Activated T-helper 2 cell treated with anti-CD3 and anti-CD28 coated beads, Interferon-gamma antibody, Interleukin-2, Interleukin-4, amounts not matched to agents 10 μg/mL and 5 μg/mL and 100 μg/mL, durations not matched to agents 14 hours and 24 hours and 36 hours (primary cell): ENCODE measurements at regions of chrX and their contacts with region 1.

Region 1: GRCh38 chrX:48715072-48715471 is 18.5 kb downstream of the SUV39H1 start:
- DNase-seq: no peak
- H3K4me3 Mint-ChIP-seq: peak overlapping the region; percentile 15
- H3K27ac Mint-ChIP-seq: peak overlapping the region; percentile 94
- H3K4me1 Mint-ChIP-seq: peaks cover 75% of the 10 kb centered on the region
- H3K27me3 Mint-ChIP-seq: no peaks in the 10 kb centered on the region

Region 2: GRCh38 chrX:48696301-48697181 is 18.5 kb before region 1 on chrX and contains the start of gene SUV39H1:
- intact Hi-C with region 1: loop called (anchors 1 kb)
- DNase-seq: peak; percentile 84
- H3K4me3 Mint-ChIP-seq: peak within 1 kb of the TSS; percentile 94
- H3K27ac Mint-ChIP-seq: peak within 1 kb of the TSS; percentile 94
- H3K4me1 Mint-ChIP-seq: peaks cover 26% of the 10 kb centered on the region
- H3K27me3 Mint-ChIP-seq: no peaks in the 10 kb centered on the region
- total RNA-seq, gene SUV39H1: 28.8 and 29.6 TPM in 2 replicates

Region 3: DNA sequence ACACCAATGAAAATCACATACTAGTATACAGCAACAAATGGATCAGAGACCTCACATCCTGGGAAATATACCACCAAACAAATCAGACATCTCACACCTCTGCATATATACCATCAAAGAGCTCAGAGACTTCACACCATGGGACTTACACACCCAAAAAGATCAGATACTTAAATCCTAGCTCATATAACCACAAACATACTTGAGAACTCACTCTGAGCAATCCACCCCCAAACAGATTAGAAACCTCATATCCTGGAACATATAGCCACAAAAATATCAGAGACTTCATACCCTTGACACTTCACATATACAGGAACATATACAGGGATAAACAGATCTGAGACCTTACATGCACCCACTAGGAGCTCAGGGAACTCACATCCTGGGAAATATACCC is 13.6 kb after region 1 on chrX:
- intact Hi-C with region 1: loop called (anchors 2 kb)
- DNase-seq: no peak
- H3K4me3 Mint-ChIP-seq: no peak overlapping the region
- H3K27ac Mint-ChIP-seq: peak overlapping the region; percentile 31
- H3K4me1 Mint-ChIP-seq: peaks cover 24% of the 10 kb centered on the region
- H3K27me3 Mint-ChIP-seq: no peaks in the 10 kb centered on the region

Region 4: DNA sequence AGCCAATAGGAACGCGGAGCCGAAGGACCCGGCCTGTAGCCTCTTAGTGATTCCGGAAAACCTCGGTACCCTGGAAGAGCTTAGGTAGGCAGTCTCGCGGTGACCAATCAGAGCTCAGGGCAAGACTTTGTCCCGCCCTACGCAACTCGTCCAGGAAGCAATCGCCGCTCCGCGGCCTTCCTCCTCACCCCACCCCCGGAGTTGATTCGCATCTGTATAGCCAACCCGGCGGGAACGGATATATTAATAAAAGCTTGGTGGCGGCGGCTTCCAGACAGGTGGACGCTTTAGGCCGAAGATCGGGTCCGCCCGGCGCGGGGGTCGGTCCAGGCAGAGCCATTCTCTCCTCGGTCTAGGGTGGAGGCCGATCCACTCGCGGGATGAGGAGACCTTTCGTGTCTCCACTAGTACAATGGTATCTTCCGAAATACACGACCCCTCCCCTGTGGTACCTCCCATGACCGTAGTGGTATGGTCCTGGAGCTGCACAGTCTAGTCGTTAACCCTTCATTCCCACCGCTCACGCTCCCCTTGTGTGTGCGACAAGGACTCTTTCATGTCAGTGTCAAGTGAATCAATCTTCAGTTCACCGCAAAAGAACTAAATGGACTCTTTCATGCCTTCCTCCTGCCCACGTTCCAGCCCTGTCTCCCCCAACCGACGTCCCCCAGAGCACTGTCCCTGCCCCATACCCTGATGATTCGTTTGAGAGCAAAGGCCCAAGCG is 22.3 kb after region 1 on chrX:
- intact Hi-C with region 1: loop called (anchors 1 kb)
- DNase-seq: peak; percentile 86
- H3K4me3 Mint-ChIP-seq: peak overlapping the region; percentile 89
- H3K27ac Mint-ChIP-seq: peak overlapping the region; percentile 93
- H3K4me1 Mint-ChIP-seq: peaks cover 15% of the 10 kb centered on the region
- H3K27me3 Mint-ChIP-seq: no peaks in the 10 kb centered on the region

Region 5: DNA sequence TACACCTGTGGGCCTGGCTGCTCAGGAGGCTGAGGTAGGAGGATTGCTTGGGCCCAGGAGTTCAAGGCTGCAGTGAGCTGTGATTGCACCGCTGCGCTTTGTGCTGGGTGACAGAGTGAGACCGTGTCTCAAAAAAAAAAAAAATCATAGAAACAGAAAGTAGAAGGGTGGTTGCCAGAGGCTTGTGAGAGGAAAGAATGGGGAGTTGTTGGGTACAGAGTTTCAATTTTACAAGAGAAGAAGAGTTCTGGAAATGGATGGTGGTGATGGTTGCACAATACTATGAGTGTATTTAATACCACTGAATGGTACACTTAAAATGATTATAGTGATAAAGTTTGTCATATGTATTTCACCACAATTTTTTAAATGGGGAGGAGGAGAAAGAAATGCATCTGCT is 36.3 kb after region 1 on chrX:
- intact Hi-C with region 1: loop called (anchors 2 kb)
- DNase-seq: no peak
- H3K4me3 Mint-ChIP-seq: no peak overlapping the region
- H3K27ac Mint-ChIP-seq: no peak overlapping the region
- H3K4me1 Mint-ChIP-seq: peaks cover 7% of the 10 kb centered on the region
- H3K27me3 Mint-ChIP-seq: peaks cover 3% of the 10 kb centered on the region

Region 6: DNA sequence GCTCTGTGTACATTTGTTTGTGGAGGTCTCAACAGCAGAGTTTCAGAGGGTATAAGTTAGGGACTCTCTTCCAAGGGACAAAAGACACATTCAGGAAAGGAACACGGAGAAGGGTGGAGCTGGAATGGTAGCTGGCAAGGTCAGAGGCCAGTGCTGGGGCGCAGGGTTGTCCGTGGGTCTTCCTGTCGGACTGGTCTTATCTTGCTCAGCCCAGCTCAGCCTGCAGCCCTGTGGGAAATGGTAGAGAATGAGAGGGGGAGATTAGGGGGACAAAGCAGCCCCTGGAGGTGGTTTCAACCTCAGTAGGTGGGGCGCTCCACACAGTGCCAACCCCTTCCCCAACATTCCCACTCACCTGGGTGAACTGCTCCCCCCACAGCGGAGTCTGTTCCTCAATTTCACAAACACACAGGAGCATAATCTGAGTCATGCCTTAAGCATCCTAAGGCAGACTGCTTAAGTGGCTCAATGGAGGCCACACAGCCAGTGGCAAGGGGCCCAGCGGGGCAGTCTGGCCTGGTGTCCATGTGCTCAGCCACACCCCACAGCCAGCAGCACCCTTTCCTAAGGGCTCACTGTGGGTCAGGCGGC is 79.9 kb after region 1 on chrX:
- intact Hi-C with region 1: no loop called
- DNase-seq: no peak
- H3K4me3 Mint-ChIP-seq: no peak overlapping the region
- H3K27ac Mint-ChIP-seq: no peak overlapping the region
- H3K4me1 Mint-ChIP-seq: no peaks in the 10 kb centered on the region
- H3K27me3 Mint-ChIP-seq: no peaks in the 10 kb centered on the region

Region 7: GRCh38 chrX:48937054-48937907 is 222.2 kb after region 1 on chrX:
- intact Hi-C with region 1: loop called (anchors 10 kb)
- DNase-seq: peak; percentile 87
- H3K4me3 Mint-ChIP-seq: peak overlapping the region; percentile 71
- H3K27ac Mint-ChIP-seq: peak overlapping the region; percentile 99
- H3K4me1 Mint-ChIP-seq: peaks cover 71% of the 10 kb centered on the region
- H3K27me3 Mint-ChIP-seq: no peaks in the 10 kb centered on the region

Region 8: GRCh38 chrX:49269010-49269767 is 554.1 kb after region 1 on chrX:
- intact Hi-C with region 1: loop called (anchors 10 kb)
- DNase-seq: peak; percentile 92
- H3K4me3 Mint-ChIP-seq: peak overlapping the region; percentile 87
- H3K27ac Mint-ChIP-seq: peak overlapping the region; percentile 98
- H3K4me1 Mint-ChIP-seq: peaks cover 43% of the 10 kb centered on the region
- H3K27me3 Mint-ChIP-seq: no peaks in the 10 kb centered on the region